Stomach (tissue), 19 donors: ENCODE measurements at regions of chr1 and their contacts with region 1.

Region 1: GRCh38 chr1:183234660-183235476 is 48.8 kb downstream of the LAMC2 start:
- DNase-seq: peak; percentile 45 to 86
- H3K4me3 ChIP-seq: peak overlapping the region; percentile 29 to 33 (median 31)
- H3K27ac ChIP-seq: peak overlapping the region; percentile 65 to 85 (median 81)
- H3K4me1 ChIP-seq: peaks cover 16 to 28% (median 18%) of the 10 kb centered on the region in 4 donors
- H3K27me3 ChIP-seq: no peaks in the 10 kb centered on the region
- CTCF ChIP-seq: peak in 5 of 7 experiments; percentile 32 to 75 (median 63)
- EP300 ChIP-seq: no peak
- POLR2A ChIP-seq: no peak

Region 2: GRCh38 chr1:182968151-182968765 is 266.6 kb before region 1 on chr1:
- intact Hi-C with region 1: loop called (anchors 5 kb)
- DNase-seq: peak in 1 of 2 donors; percentile 28
- H3K4me3 ChIP-seq: no peak overlapping the region
- H3K27ac ChIP-seq: no peak overlapping the region
- H3K4me1 ChIP-seq: peaks cover 0 to 14% (median 0%) of the 10 kb centered on the region in 4 donors
- H3K27me3 ChIP-seq: no peaks in the 10 kb centered on the region
- CTCF ChIP-seq: no peak
- EP300 ChIP-seq: no peak
- POLR2A ChIP-seq: no peak